ENCODE measurements at regions of chr12 and their contacts with region 1.

Region 1: DNA sequence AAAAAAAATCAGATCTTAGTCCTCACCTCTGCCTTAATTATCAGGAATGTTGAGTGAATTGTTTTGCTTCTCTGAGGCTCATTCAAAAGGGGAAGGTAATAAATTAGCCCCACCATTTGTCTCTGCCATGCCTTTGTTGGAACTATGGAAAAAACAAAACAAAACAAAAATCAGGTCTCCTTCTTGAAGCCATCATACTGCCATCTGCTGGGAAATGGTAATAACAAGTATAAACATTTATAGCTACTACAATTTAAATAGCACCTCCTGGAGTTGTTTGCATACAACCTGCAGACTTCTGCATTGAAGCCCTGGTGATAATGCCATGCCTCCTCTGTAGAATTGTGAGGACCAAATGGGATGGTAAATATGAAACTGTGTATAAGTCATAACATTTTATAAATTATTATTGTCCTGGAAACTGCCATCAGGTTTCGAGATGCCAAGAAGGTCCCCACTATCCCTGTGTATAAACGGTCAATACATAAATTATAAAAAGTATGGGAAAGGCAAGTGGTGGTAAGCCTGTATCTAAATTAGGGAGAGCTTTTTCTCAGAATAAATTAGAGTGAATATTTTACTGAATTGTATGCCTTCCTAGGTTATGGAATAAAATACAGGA is 87.2 kb upstream of the FGD4 start:
- DNase-seq: peak in 1 of 2 experiments; percentile 50
- H3K4me3 ChIP-seq: no peak overlapping the region
- H3K27ac ChIP-seq: no peak overlapping the region
- H3K4me1 ChIP-seq: no peaks in the 10 kb centered on the region
- H3K27me3 ChIP-seq: no peaks in the 10 kb centered on the region
- CTCF ChIP-seq: peak; percentile 72

Region 2: DNA sequence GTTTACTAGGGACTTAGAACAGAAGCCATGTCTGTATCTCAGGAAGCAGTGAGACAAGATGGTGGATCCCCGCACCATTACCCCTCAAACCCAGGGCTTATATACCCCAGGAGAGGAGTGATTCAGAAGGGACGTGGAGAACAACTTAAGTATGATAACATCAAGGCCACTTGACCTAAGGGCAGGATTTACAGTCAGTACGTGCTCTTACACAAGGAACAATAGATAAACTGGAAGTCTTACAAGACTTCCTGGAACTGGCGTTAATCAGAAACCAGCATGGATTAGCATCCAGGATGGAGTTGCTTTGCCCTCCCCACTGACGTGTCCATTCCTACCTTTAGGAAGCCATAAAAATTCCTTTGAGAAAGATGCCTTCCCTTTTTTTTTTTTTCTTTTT is 661.2 kb before region 1 on chr12:
- CTCF ChIA-PET with region 1: interaction called, 17 read pairs
- POLR2A ChIA-PET with region 1: interaction called, 6 read pairs
- intact Hi-C with region 1: loop called (anchors 2 kb)
- DNase-seq: no peak
- H3K4me3 ChIP-seq: no peak overlapping the region
- H3K27ac ChIP-seq: no peak overlapping the region
- H3K4me1 ChIP-seq: peaks cover 5% of the 10 kb centered on the region; the same call in 1 of the 2 replicates
- H3K27me3 ChIP-seq: no peaks in the 10 kb centered on the region
- CTCF ChIP-seq: no peak

Region 3: GRCh38 chr12:31659087-31659933 is 652.9 kb before region 1 on chr12 and contains the start of gene ETFBKMT:
- CTCF ChIA-PET with region 1: interaction called, 17 read pairs
- POLR2A ChIA-PET with region 1: no interaction called
- intact Hi-C with region 1: no loop called
- DNase-seq: peak; percentile 94 to 97
- H3K4me3 ChIP-seq: peak within 1 kb of the TSS; percentile 62
- H3K27ac ChIP-seq: peak within 1 kb of the TSS; percentile 63
- H3K4me1 ChIP-seq: peaks cover 17% of the 10 kb centered on the region
- H3K27me3 ChIP-seq: no peaks in the 10 kb centered on the region
- CTCF ChIP-seq: peak; percentile 60
- total RNA-seq, gene ETFBKMT: 2.2 and 2.4 TPM in 2 replicates

Region 4: GRCh38 chr12:31682136-31682962 is 629.8 kb before region 1 on chr12:
- CTCF ChIA-PET with region 1: no interaction called
- POLR2A ChIA-PET with region 1: no interaction called
- intact Hi-C with region 1: loop called (anchors 1 kb)
- DNase-seq: peak; percentile 68 to 72
- H3K4me3 ChIP-seq: no peak overlapping the region
- H3K27ac ChIP-seq: no peak overlapping the region
- H3K4me1 ChIP-seq: no peaks in the 10 kb centered on the region
- H3K27me3 ChIP-seq: no peaks in the 10 kb centered on the region
- CTCF ChIP-seq: peak; percentile 87

Region 5: GRCh38 chr12:32062881-32063280 is 249.3 kb before region 1 on chr12:
- CTCF ChIA-PET with region 1: interaction called, 11 read pairs
- POLR2A ChIA-PET with region 1: no interaction called
- intact Hi-C with region 1: no loop called
- DNase-seq: no peak
- H3K4me3 ChIP-seq: no peak overlapping the region
- H3K27ac ChIP-seq: no peak overlapping the region
- H3K4me1 ChIP-seq: no peaks in the 10 kb centered on the region
- H3K27me3 ChIP-seq: no peaks in the 10 kb centered on the region
- CTCF ChIP-seq: no peak

Region 6: DNA sequence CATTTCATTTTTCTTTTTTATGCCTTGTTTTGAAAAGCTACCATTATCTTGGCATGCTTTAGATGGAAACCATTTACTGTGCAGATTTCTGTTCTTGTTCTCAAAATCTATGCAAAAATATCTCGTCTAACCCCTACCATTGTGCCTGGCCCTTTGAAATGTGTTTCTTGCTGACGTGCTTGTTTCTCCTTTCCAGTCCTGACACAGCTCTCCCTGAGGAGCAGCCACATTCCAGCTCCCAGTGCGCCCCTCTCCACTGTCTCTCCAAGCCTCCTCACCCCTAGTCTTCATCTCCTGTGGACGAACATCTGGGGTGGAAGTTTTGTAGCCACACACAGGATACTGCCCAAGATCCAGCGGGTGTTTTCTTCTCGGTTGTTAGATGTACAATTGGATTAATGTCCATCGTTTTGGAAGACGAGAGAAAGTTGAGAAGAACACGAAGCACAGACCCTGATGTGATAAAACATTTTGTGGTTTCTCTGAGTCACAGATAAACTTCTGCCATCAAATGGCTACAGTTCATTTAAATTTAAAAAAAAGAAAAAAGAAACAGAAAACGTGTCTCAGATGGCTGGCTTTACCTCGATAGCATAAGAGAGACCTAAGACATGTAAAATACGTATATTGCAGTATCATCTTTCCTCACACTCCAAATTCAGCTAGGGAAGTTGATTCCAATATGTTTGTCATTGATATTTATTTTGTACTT is 65.3 kb after region 1 on chr12:
- CTCF ChIA-PET with region 1: no interaction called
- POLR2A ChIA-PET with region 1: no interaction called
- intact Hi-C with region 1: no loop called
- DNase-seq: no peak
- H3K4me3 ChIP-seq: no peak overlapping the region
- H3K27ac ChIP-seq: no peak overlapping the region
- H3K4me1 ChIP-seq: no peaks in the 10 kb centered on the region
- H3K27me3 ChIP-seq: no peaks in the 10 kb centered on the region
- CTCF ChIP-seq: no peak

Region 7: DNA sequence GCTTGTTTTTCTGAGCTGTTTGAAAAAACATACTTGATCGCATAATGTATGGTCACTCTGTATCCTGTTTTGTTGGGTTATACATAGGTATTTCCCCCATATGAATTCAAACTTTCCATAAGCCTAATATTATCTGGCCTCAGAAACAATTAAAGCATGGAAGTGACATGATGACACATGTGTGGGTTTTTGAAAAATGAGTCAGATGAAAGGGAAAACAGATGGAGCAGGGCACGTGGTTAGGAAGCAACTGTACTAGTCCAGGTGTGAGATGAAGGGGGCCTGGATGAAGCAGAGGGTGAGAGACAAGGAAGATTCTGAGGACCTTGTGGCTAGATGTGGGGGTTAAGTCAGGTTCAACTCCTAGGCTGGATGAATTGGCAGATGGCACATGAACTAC is 274.2 kb after region 1 on chr12:
- CTCF ChIA-PET with region 1: no interaction called
- POLR2A ChIA-PET with region 1: no interaction called
- intact Hi-C with region 1: no loop called
- DNase-seq: no peak
- H3K4me3 ChIP-seq: no peak overlapping the region
- H3K27ac ChIP-seq: no peak overlapping the region
- H3K4me1 ChIP-seq: 0 out of 2 replicates have a peak, but pooled peaks cover 3% of the 10 kb centered on the region
- H3K27me3 ChIP-seq: no peaks in the 10 kb centered on the region
- CTCF ChIP-seq: no peak

Region 8: GRCh38 chr12:32743264-32743663 is 431.1 kb after region 1 on chr12:
- CTCF ChIA-PET with region 1: interaction called, 19 read pairs
- POLR2A ChIA-PET with region 1: no interaction called
- intact Hi-C with region 1: no loop called
- DNase-seq: no peak
- H3K4me3 ChIP-seq: no peak overlapping the region
- H3K27ac ChIP-seq: no peak overlapping the region
- H3K4me1 ChIP-seq: no peaks in the 10 kb centered on the region
- H3K27me3 ChIP-seq: no peaks in the 10 kb centered on the region
- CTCF ChIP-seq: no peak

Measured in PC-9 (cell line).